GM18951 (cell line): ENCODE measurements at regions of chr17 and their contacts with region 1.

Region 1: DNA sequence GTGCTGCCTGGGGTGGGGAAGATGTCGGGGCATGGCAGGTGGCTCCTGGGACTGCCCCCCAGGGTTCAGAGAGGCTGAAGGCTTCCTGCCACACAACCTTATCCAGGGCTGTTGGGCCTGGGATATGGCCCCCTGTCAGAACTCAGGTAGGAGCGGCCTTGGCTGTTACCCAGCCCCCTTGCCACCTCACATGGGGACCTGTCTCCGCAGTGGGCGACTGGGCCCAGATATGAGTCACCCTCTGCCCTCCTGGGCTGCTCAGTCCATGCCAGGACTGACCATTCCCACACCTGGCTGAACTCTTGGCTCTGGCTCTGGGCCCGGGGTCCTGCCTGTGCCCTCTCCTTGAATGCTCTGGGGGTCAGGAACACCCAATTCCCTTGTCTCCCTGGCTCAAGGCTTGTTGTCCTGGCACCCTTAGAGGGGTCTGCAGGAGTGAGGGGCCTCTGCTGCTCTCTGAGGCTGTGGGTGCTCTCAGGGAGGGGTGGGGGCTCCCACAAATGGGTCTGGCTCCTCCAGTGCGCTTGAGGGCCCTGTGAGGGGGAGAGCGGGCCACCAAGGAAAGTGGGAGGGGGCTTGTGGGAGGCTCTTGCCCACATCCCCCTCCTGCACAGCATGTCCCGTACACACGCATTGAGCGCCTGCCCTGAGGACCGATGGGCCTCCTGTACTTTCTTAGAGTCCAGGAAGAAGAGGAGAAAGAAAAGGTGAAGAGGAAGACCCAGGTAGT is 36.0 kb downstream of the LGALS9 start:
- POLR2A ChIP-seq: no peak

Region 2: GRCh38 chr17:27526604-27527230 is 140.3 kb before region 1 on chr17:
- in situ Hi-C with region 1: no loop called
- POLR2A ChIP-seq: no peak

Region 3: DNA sequence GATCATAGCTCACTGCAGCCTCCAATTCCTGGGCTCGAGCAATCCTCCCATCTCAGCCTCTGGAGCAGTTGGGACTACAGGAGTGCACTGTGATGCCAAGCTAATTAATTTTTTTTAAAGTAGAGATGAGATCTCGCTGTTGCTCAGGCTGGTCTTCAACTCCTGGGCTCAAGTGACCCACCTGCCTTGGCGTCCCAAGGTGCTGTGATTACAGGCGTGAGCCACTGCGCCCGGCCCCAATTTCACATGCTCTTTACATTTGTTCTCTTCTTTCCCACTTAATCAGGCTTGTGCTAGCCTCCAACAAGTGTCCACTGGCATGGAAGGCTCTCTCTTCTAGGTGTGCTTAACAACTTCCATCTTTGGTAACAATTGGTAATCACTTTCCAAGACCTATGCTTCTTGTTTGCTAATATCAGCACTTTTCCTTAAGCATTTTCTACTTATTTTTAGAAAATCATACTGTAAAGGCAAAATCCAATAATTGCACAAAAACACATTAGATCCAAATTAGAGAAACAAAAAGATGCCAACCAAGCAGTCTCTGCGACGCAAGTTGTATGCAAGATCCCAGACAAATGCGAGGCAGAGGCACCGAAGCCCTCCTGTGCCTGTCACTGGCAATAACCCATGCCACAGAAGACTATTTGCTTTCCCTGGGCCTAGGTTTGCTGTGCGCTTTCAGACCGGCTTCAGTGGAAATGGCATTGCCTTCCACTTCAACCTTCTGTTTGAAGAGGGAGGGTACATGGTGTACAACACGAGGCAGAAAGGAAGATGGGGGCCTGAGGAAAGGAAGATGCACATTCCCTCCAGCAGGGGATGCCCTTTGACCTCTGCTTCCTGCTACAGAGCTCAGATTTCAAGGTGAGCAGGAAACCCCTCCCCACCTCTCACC is 80.7 kb after region 1 on chr17:
- in situ Hi-C with region 1: loop called (anchors 10 kb)
- POLR2A ChIP-seq: no peak